ENCODE measurements at regions of chr11 and their contacts with region 1.

Region 1: GRCh38 chr11:13970986-13971385 is 8.5 kb downstream of the SPON1 start:
- DNase-seq: peak; percentile 48
- ATAC-seq: no peak
- H3K4me3 Mint-ChIP-seq: no peak overlapping the region
- H3K27ac Mint-ChIP-seq: no peak overlapping the region
- H3K4me1 Mint-ChIP-seq: peaks cover 21% of the 10 kb centered on the region
- H3K27me3 Mint-ChIP-seq: peaks cover 11% of the 10 kb centered on the region

Region 2: DNA sequence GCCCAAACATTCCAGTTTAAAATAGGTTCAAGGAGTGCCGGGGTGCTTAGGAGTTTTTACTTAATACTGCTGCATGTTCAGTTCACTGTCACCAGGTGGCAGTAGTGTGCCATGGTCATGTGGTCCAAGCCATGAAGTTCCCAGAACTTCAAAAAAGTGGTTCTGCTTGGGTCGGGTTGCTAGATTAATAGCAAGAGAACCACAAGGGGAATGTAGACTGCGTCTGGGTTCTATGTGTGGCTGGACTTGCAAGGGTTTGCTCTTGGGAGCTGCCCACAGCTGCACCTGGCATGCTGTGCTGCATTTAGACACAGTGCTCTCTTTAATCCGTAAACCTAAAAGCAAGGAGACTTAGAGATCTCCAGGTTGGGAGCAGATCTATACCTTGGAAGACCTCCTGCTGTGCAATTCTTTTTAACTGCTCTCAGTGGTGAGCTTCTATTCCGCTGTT is 15.0 kb before region 1 on chr11:
- CTCF ChIA-PET with region 1: interaction called, 14 read pairs
- POLR2A ChIA-PET with region 1: no interaction called
- intact Hi-C with region 1: no loop called
- DNase-seq: peak; percentile 71
- ATAC-seq: peak; percentile 58
- H3K4me3 Mint-ChIP-seq: no peak overlapping the region
- H3K27ac Mint-ChIP-seq: no peak overlapping the region
- H3K4me1 Mint-ChIP-seq: no peaks in the 10 kb centered on the region
- H3K27me3 Mint-ChIP-seq: peaks cover 13% of the 10 kb centered on the region